ENCODE measurements at regions of chr6 and their contacts with region 1.

Region 1: GRCh38 chr6:136840276-136841001 is 18.0 kb downstream of the PEX7 start:
- DNase-seq: no peak
- ATAC-seq: no peak
- H3K4me3 ChIP-seq: no peak overlapping the region
- H3K27ac ChIP-seq: no peak overlapping the region
- H3K4me1 ChIP-seq: no peaks in the 10 kb centered on the region
- H3K27me3 ChIP-seq: no peaks in the 10 kb centered on the region
- CTCF ChIP-seq: no peak
- EP300 ChIP-seq: no peak
- POLR2A ChIP-seq: no peak
- RAD21 ChIP-seq: no peak

Region 2: GRCh38 chr6:136696238-136696637 is 144.2 kb before region 1 on chr6:
- CTCF ChIA-PET with region 1: no interaction called
- POLR2A ChIA-PET with region 1: no interaction called
- RAD21 ChIA-PET with region 1: no interaction called
- SMC1A ChIA-PET with region 1: no interaction called
- in situ Hi-C with region 1: no loop called
- intact Hi-C with region 1: no loop called
- DNase-seq: no peak
- ATAC-seq: no peak
- H3K4me3 ChIP-seq: no peak overlapping the region
- H3K27ac ChIP-seq: no peak overlapping the region
- H3K4me1 ChIP-seq: no peaks in the 10 kb centered on the region
- H3K27me3 ChIP-seq: no peaks in the 10 kb centered on the region
- CTCF ChIP-seq: no peak
- EP300 ChIP-seq: no peak
- POLR2A ChIP-seq: no peak
- RAD21 ChIP-seq: no peak

Region 3: DNA sequence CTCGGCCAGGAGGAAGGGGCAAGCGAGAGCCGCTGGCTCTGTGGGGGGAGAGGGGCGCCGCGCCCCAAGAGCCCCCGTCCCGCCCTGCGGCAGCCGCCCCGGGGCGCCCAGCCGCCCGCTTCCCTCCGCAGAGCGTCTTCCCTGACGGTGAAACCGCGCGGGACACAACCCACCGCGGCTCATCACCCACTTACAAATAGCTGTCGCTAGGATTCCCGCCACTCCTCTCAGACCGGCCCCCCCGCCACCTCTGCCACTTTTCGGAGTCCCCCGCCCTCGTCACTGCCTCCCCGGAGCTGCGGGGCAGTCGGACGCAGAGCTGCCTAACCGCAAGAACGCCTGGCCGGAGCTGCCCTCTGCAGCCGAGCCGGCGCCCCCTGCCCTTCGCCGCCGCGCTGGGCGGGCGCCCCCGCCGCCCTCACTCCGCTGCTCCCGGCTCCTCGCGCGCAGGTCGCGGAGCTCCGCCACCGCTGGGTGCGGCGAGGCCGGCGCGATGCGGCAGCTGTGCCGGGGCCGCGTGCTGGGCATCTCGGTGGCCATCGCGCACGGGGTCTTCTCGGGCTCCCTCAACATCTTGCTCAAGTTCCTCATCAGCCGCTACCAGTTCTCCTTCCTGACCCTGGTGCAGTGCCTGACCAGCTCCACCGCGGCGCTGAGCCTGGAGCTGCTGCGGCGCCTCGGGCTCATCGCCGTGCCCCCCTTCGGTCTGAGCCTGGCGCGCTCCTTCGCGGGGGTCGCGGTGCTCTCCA is 81.7 kb after region 1 on chr6 and contains the start of gene SLC35D3:
- CTCF ChIA-PET with region 1: interaction called, 11 read pairs
- POLR2A ChIA-PET with region 1: no interaction called
- RAD21 ChIA-PET with region 1: interaction called, 4 read pairs
- SMC1A ChIA-PET with region 1: interaction called, 3 read pairs
- in situ Hi-C with region 1: no loop called
- intact Hi-C with region 1: loop called (anchors 5 kb)
- DNase-seq: no peak
- ATAC-seq: peak; percentile 36
- H3K4me3 ChIP-seq: peak within 1 kb of the TSS; percentile 67
- H3K27ac ChIP-seq: no peak within 1 kb of the TSS
- H3K4me1 ChIP-seq: peaks cover 19% of the 10 kb centered on the region
- H3K27me3 ChIP-seq: peaks cover 16 to 28% of the 10 kb centered on the region in 2 experiments
- CTCF ChIP-seq: no peak
- EP300 ChIP-seq: no peak
- POLR2A ChIP-seq: no peak
- RAD21 ChIP-seq: no peak
- polyA plus RNA-seq, gene SLC35D3: not detected